Activated B cell treated with CpG ODN at 0.5 μM for 24 hours (primary cell): ENCODE measurements at regions of chr3 and their contacts with region 1.

Region 1: DNA sequence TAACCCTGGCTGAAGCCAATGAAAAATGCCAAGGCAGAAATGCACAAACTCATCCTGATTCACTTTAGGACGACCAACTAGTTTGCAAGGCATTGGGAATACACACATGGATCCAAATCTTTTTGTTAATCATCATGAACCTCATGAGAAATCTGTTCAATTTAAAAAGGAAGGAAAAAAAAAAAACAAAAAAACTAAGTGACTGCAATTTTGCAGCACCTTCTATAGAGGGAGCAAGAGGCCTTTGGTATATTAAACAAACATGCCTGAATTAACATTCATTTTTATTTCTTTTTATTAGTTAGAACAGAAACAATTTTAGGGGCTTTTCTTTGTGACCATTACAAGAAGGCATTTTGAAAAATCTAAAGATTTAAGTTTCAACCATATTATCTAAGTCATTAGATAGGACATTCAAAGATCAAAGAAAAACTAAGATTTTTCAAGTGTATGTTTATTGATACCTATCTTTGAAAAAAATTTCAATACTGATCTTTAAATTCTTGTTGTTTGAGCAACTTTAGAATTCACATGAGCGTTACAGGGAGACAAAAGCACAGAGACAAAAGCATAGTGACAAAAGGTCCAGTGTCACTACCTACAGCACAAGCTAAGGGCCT is 182.4 kb downstream of the CBLB start:
- DNase-seq: no peak
- ATAC-seq: peak; percentile 40
- H3K4me3 Mint-ChIP-seq: no peak overlapping the region
- H3K27ac Mint-ChIP-seq: peak overlapping the region; percentile 41
- H3K4me1 Mint-ChIP-seq: peaks cover 8% of the 10 kb centered on the region
- H3K27me3 Mint-ChIP-seq: no peaks in the 10 kb centered on the region
- CTCF ChIP-seq: peak; percentile 65

Region 2: GRCh38 chr3:105704726-105705410 is 18.5 kb after region 1 on chr3:
- CTCF ChIA-PET with region 1: no interaction called
- POLR2A ChIA-PET with region 1: no interaction called
- intact Hi-C with region 1: no loop called
- DNase-seq: no peak
- ATAC-seq: no peak
- H3K4me3 Mint-ChIP-seq: no peak overlapping the region
- H3K27ac Mint-ChIP-seq: no peak overlapping the region
- H3K4me1 Mint-ChIP-seq: no peaks in the 10 kb centered on the region
- H3K27me3 Mint-ChIP-seq: no peaks in the 10 kb centered on the region
- CTCF ChIP-seq: no peak

Region 3: GRCh38 chr3:105836533-105836932 is 150.1 kb after region 1 on chr3:
- CTCF ChIA-PET with region 1: no interaction called
- POLR2A ChIA-PET with region 1: no interaction called
- intact Hi-C with region 1: loop called (anchors 1 kb)
- DNase-seq: no peak
- ATAC-seq: no peak
- H3K4me3 Mint-ChIP-seq: peak overlapping the region; percentile 72
- H3K27ac Mint-ChIP-seq: peak overlapping the region; percentile 82
- H3K4me1 Mint-ChIP-seq: peaks cover 63% of the 10 kb centered on the region
- H3K27me3 Mint-ChIP-seq: no peaks in the 10 kb centered on the region
- CTCF ChIP-seq: no peak

Region 4: GRCh38 chr3:106121505-106122284 is 435.3 kb after region 1 on chr3:
- CTCF ChIA-PET with region 1: interaction called, 3 read pairs
- POLR2A ChIA-PET with region 1: no interaction called
- intact Hi-C with region 1: loop called (anchors 2 kb)
- DNase-seq: no peak
- ATAC-seq: no peak
- H3K4me3 Mint-ChIP-seq: no peak overlapping the region
- H3K27ac Mint-ChIP-seq: no peak overlapping the region
- H3K4me1 Mint-ChIP-seq: peaks cover 7% of the 10 kb centered on the region
- H3K27me3 Mint-ChIP-seq: no peaks in the 10 kb centered on the region
- CTCF ChIP-seq: no peak

Region 5: DNA sequence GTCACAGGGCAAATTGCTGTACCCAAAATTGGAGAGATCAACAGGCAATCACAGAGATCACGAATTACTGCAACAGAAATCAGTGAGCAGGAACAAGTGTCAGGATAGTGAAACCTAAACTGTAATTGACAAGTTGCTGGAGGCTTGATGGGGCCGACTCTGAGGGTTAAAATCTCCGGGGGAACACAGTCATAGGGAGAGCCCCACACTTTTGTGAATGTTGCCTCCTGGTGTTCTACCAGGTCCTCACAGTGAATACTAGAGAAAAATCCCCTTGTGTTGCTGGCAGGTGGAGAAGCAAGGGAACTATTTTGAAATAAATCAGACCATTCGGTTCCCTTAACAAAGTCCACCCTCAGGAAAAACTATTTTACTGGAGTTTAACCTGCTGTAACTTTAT is 879.9 kb after region 1 on chr3:
- CTCF ChIA-PET with region 1: interaction called, 3 read pairs
- POLR2A ChIA-PET with region 1: no interaction called
- intact Hi-C with region 1: loop called (anchors 1 kb)
- DNase-seq: no peak
- ATAC-seq: peak; percentile 65
- H3K4me3 Mint-ChIP-seq: no peak overlapping the region
- H3K27ac Mint-ChIP-seq: no peak overlapping the region
- H3K4me1 Mint-ChIP-seq: peaks cover 5% of the 10 kb centered on the region
- H3K27me3 Mint-ChIP-seq: peaks cover 4% of the 10 kb centered on the region
- CTCF ChIP-seq: no peak

Region 6: GRCh38 chr3:107064445-107065060 is 1378.2 kb after region 1 on chr3:
- CTCF ChIA-PET with region 1: no interaction called
- POLR2A ChIA-PET with region 1: no interaction called
- intact Hi-C with region 1: loop called (anchors 1 kb)
- DNase-seq: no peak
- ATAC-seq: peak; percentile 78
- H3K4me3 Mint-ChIP-seq: no peak overlapping the region
- H3K27ac Mint-ChIP-seq: no peak overlapping the region
- H3K4me1 Mint-ChIP-seq: peaks cover 4% of the 10 kb centered on the region
- H3K27me3 Mint-ChIP-seq: peaks cover 3% of the 10 kb centered on the region
- CTCF ChIP-seq: peak; percentile 63